PC-9 (cell line): ENCODE measurements at regions of chr5 and their contacts with region 1.

Region 1: GRCh38 chr5:33936004-33936380 is 194 bp upstream of the RXFP3 start:
- DNase-seq: peak in 1 of 2 experiments; percentile 21
- H3K4me3 ChIP-seq: no peak overlapping the region
- H3K27ac ChIP-seq: no peak overlapping the region
- H3K4me1 ChIP-seq: peaks cover 14% of the 10 kb centered on the region
- H3K27me3 ChIP-seq: no peaks in the 10 kb centered on the region
- CTCF ChIP-seq: no peak

Region 2: GRCh38 chr5:32842813-32843530 is 1093.0 kb before region 1 on chr5:
- CTCF ChIA-PET with region 1: no interaction called
- POLR2A ChIA-PET with region 1: interaction called, 11 read pairs
- intact Hi-C with region 1: no loop called
- DNase-seq: peak; percentile 58 to 92
- H3K4me3 ChIP-seq: no peak overlapping the region
- H3K27ac ChIP-seq: peak overlapping the region; percentile 6; the same call in 1 of the 2 replicates
- H3K4me1 ChIP-seq: peaks cover 16% of the 10 kb centered on the region
- H3K27me3 ChIP-seq: peaks cover 25% of the 10 kb centered on the region
- CTCF ChIP-seq: no peak

Region 3: GRCh38 chr5:33494466-33494865 is 441.5 kb before region 1 on chr5:
- CTCF ChIA-PET with region 1: interaction called, 16 read pairs
- POLR2A ChIA-PET with region 1: no interaction called
- intact Hi-C with region 1: no loop called
- DNase-seq: no peak
- H3K4me3 ChIP-seq: no peak overlapping the region
- H3K27ac ChIP-seq: no peak overlapping the region
- H3K4me1 ChIP-seq: no peaks in the 10 kb centered on the region
- H3K27me3 ChIP-seq: no peaks in the 10 kb centered on the region
- CTCF ChIP-seq: no peak

Region 4: DNA sequence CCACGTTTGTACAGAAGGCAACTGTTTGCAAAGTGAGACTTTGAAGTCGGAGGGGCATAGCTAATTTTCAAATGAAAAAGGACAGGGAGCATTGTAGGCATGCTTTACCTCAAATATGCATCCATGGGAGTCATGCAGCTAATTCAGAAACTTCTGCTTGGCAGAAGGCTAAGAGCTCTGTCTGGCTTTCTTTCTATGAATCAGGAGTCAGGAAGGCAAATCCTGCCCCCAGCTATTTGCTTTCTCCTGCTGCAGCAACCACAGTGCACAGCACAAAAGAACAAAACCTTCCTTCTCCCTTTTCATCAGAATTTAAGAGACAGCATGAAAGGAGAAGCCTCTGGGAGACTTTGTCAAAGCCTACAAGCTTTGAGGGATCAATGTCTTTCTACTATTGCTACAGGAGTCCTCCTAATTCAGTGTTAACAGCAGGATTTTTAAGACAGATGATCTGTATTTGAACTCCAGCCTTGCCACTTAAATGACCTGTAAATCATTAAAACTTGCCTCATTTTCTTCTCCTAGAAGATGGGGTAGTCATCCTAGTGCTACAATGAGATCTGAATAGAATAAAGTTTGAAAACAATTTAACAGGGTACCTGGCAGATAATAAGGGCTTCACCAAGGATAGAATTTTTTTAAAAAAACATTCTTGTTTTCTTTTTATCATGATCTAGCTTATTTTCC is 286.1 kb before region 1 on chr5:
- CTCF ChIA-PET with region 1: interaction called, 7 read pairs
- POLR2A ChIA-PET with region 1: no interaction called
- intact Hi-C with region 1: loop called (anchors 2 kb)
- DNase-seq: peak; percentile 72 to 90
- H3K4me3 ChIP-seq: no peak overlapping the region
- H3K27ac ChIP-seq: peak overlapping the region; percentile 30
- H3K4me1 ChIP-seq: peaks cover 30% of the 10 kb centered on the region
- H3K27me3 ChIP-seq: no peaks in the 10 kb centered on the region
- CTCF ChIP-seq: no peak

Region 5: GRCh38 chr5:33816791-33817190 is 119.2 kb before region 1 on chr5:
- CTCF ChIA-PET with region 1: no interaction called
- POLR2A ChIA-PET with region 1: no interaction called
- intact Hi-C with region 1: loop called (anchors 2 kb)
- DNase-seq: no peak
- H3K4me3 ChIP-seq: no peak overlapping the region
- H3K27ac ChIP-seq: peak overlapping the region; percentile 67
- H3K4me1 ChIP-seq: peaks cover 25% of the 10 kb centered on the region
- H3K27me3 ChIP-seq: no peaks in the 10 kb centered on the region
- CTCF ChIP-seq: no peak

Region 6: DNA sequence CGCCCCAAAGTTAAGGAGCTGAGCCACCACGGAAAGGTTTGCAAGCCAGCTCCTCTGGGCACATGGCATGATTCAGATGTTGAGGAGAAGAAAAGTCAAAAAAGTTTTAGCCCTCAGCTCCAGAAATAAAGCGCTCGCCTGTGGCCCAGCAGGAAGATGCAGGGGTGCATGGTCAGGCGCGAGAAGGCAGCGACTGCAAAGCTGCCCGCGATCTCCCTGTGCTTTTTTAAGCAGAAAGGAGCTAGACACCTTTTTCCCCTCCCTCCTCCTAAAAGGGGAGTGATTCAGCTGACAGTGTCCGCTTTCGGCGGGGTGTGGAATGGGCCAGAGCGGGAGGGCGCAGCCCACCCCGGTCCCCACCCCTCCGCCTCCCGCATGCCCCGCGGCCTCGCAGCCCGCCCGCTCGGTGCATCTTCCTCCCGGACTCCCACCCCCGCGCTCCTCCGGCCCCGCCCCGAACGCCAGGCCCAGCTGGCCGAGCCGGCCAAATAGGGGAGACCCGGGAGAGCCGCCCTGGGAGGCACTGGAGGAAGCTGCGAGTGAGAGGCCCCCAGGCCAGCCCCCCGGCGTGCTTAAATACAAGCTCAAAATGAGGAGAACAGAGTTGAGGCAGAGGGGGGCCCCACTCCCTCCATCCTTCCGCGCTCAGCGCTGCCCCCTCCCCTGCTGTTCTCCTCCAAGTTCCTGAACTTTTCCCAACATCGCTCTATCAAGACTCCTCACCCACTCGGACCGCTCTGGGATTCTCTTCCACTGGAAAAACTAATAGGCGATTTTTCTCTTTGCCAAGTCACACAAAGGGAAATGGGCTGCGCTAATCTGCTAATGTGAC is 44.0 kb before region 1 on chr5 and contains the start of gene ADAMTS12:
- CTCF ChIA-PET with region 1: interaction called, 18 read pairs
- POLR2A ChIA-PET with region 1: interaction called, 10 read pairs
- intact Hi-C with region 1: loop called (anchors 1 kb)
- DNase-seq: peak; percentile 68 to 87
- H3K4me3 ChIP-seq: peak within 1 kb of the TSS; percentile 67
- H3K27ac ChIP-seq: peak within 1 kb of the TSS; percentile 75
- H3K4me1 ChIP-seq: peaks cover 77% of the 10 kb centered on the region
- H3K27me3 ChIP-seq: no peaks in the 10 kb centered on the region
- CTCF ChIP-seq: no peak; the same call in 1 of the 2 replicates
- total RNA-seq, gene ADAMTS12: 71.1 and 103 TPM in 2 replicates

Region 7: GRCh38 chr5:33994845-33995244 is 58.9 kb after region 1 on chr5:
- CTCF ChIA-PET with region 1: no interaction called
- POLR2A ChIA-PET with region 1: no interaction called
- intact Hi-C with region 1: no loop called
- DNase-seq: no peak
- H3K4me3 ChIP-seq: no peak overlapping the region
- H3K27ac ChIP-seq: no peak overlapping the region
- H3K4me1 ChIP-seq: no peaks in the 10 kb centered on the region
- H3K27me3 ChIP-seq: no peaks in the 10 kb centered on the region
- CTCF ChIP-seq: no peak

Region 8: DNA sequence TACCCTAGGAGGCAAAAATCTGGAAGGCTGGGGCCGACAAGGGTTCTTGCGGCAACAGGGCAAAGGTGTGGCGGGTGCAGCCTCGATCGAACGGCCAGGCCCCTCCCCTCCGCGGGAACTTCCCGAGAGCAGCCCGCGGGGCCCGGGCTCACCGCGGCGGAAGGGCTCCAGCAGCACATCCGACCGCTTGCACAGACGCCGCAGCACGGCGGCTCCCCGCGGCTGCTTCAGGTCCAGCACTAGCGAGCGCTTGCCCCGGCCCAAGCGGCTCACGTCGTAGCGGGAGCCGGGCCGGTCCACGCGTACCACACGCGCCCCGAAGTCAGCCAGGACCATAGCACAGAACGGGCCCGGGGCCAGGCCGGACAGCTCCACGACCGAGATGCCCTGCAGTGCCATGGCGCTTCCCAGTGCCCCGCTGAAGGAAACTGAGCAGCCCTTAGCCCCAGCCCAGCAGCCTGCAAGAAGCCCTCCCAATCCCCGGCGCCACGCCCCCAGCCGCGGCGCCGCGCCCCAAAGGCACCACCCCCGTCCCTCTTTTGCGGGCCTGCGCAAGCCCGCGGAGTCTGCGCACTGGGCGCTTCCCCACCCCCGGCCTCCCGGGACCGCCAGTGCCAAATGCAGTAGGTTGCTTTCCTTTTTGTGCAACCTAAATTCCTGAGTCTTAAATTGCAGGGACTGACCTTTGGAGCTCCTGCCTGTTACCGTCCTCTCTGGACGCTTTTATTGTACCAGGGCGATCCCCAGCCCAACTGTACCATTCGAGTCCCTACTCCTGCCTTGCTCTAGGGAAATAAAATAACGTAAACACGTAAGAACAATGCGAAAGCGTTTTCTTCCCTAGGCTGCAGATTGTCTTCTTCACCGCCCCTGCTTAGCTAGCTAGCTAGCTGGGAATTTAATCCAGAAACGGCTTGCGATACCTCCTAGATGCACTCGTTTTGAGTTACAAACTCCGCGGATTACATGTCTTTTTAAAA is 71.9 kb after region 1 on chr5 and contains the start of gene AMACR:
- CTCF ChIA-PET with region 1: interaction called, 5 read pairs
- POLR2A ChIA-PET with region 1: interaction called, 38 read pairs
- intact Hi-C with region 1: no loop called
- DNase-seq: peak; percentile 90 to 100
- H3K4me3 ChIP-seq: peak within 1 kb of the TSS; percentile 82
- H3K27ac ChIP-seq: peak within 1 kb of the TSS; percentile 50
- H3K4me1 ChIP-seq: peaks cover 26% of the 10 kb centered on the region
- H3K27me3 ChIP-seq: no peaks in the 10 kb centered on the region
- CTCF ChIP-seq: no peak
- total RNA-seq, gene AMACR: 31.1 and 31.2 TPM in 2 replicates